ENCODE measurements at regions of chr17 and their contacts with region 1.

Region 1: GRCh38 chr17:29111816-29112499 is 68.2 kb downstream of the MYO18A start:
- DNase-seq: peak in 1 of 2 experiments; percentile 95
- H3K4me3 ChIP-seq: no peak overlapping the region
- H3K27ac ChIP-seq: no peak overlapping the region
- H3K4me1 ChIP-seq: peaks cover 0 to 18% (median 12%) of the 10 kb centered on the region in 4 experiments; a peak in 6 of 7 replicates
- H3K27me3 ChIP-seq: no peaks in the 10 kb centered on the region
- CTCF ChIP-seq: peak; percentile 94 to 99 (median 96)
- EP300 ChIP-seq: no peak
- POLR2A ChIP-seq: no peak
- RAD21 ChIP-seq: peak; percentile 84 to 89

Region 2: DNA sequence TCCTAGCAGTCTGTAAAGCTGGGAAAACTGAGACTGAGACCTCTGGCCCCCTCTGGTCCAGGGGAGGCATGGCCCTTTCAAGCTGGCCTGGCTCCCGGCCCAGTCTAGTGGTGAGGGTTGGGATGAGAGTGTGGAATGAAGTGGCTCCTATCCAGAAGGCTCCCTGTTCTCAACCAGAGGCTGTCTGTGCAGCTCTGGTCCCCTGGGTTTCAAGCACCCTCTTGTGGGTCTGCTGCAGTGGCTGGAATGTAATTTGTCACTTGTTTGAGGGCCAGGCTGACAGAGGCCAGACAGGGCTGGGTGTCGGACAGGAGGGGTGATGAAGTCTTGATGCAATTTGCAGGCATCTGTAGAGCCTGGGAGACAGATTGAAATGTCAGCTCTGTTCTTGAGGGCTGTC is 138.5 kb before region 1 on chr17:
- CTCF ChIA-PET with region 1: interaction called, 207 read pairs
- POLR2A ChIA-PET with region 1: interaction called, 5 read pairs
- DNase-seq: no peak
- H3K4me3 ChIP-seq: no peak overlapping the region
- H3K27ac ChIP-seq: no peak overlapping the region
- H3K4me1 ChIP-seq: peaks cover 10 to 16% (median 11%) of the 10 kb centered on the region in 4 experiments
- H3K27me3 ChIP-seq: peaks cover 0 to 2% (median 0%) of the 10 kb centered on the region in 4 experiments; a peak in 2 of 7 replicates
- CTCF ChIP-seq: no peak
- EP300 ChIP-seq: no peak
- POLR2A ChIP-seq: no peak
- RAD21 ChIP-seq: no peak

Region 3: GRCh38 chr17:29005936-29006511 is 105.9 kb before region 1 on chr17 and contains the start of gene SEZ6:
- CTCF ChIA-PET with region 1: interaction called, 239 read pairs
- POLR2A ChIA-PET with region 1: interaction called, 4 read pairs
- DNase-seq: peak; percentile 29 to 94
- H3K4me3 ChIP-seq: peak within 1 kb of the TSS; percentile 36 to 54 (median 45)
- H3K27ac ChIP-seq: no peak within 1 kb of the TSS
- H3K4me1 ChIP-seq: peaks cover 22 to 59% (median 37%) of the 10 kb centered on the region in 4 experiments
- H3K27me3 ChIP-seq: peaks cover 6 to 25% (median 20%) of the 10 kb centered on the region in 4 experiments; a peak in 6 of 7 replicates
- CTCF ChIP-seq: no peak
- EP300 ChIP-seq: peak in 1 of 2 experiments; percentile 87; a peak in 1 of 3 replicates
- POLR2A ChIP-seq: no peak
- RAD21 ChIP-seq: peak; percentile 15 to 28; a peak in 2 of 4 replicates
- total RNA-seq, gene SEZ6: 6.9 and 7.8 TPM in 2 replicates

Region 4: DNA sequence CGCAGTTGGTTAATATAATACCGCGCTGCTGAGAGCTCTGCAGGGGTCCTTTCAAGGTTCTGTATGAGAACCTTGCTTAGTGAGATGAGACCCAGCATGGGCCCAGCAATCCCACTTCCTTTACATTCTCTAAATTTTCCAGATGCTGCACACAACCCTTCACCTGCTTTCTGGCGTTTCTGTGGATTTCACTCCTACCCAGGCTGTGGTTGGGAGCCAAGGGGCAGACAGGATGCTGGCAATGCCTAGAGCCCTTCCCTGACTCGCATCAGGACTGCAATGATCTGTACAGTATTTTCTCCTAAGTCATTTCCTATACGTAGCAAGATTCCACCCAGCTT is 79.1 kb before region 1 on chr17:
- CTCF ChIA-PET with region 1: interaction called, 41 read pairs
- POLR2A ChIA-PET with region 1: interaction called, 13 read pairs
- DNase-seq: no peak
- H3K4me3 ChIP-seq: peak overlapping the region in 2 of 4 experiments; percentile 32 to 47; a peak in 3 of 8 replicates
- H3K27ac ChIP-seq: peak overlapping the region; percentile 72; the same call in 1 of the 2 replicates
- H3K4me1 ChIP-seq: peaks cover 11 to 31% (median 22%) of the 10 kb centered on the region in 4 experiments
- H3K27me3 ChIP-seq: no peaks in the 10 kb centered on the region
- CTCF ChIP-seq: no peak
- EP300 ChIP-seq: peak in 1 of 2 experiments; percentile 64; a peak in 1 of 3 replicates
- POLR2A ChIP-seq: no peak; a peak in 1 of 3 replicates
- RAD21 ChIP-seq: no peak

Region 5: GRCh38 chr17:29048440-29049368 is 63.3 kb before region 1 on chr17:
- CTCF ChIA-PET with region 1: interaction called, 23 read pairs
- POLR2A ChIA-PET with region 1: no interaction called
- DNase-seq: no peak
- H3K4me3 ChIP-seq: no peak overlapping the region
- H3K27ac ChIP-seq: no peak overlapping the region
- H3K4me1 ChIP-seq: peaks cover 3 to 14% (median 8%) of the 10 kb centered on the region in 4 experiments
- H3K27me3 ChIP-seq: no peaks in the 10 kb centered on the region
- CTCF ChIP-seq: no peak
- EP300 ChIP-seq: no peak
- POLR2A ChIP-seq: no peak
- RAD21 ChIP-seq: no peak

Region 6: GRCh38 chr17:29084541-29085146 is 27.3 kb before region 1 on chr17:
- CTCF ChIA-PET with region 1: no interaction called
- POLR2A ChIA-PET with region 1: no interaction called
- DNase-seq: no peak
- H3K4me3 ChIP-seq: peak overlapping the region in 1 of 4 experiments; percentile 23; a peak in 1 of 8 replicates
- H3K27ac ChIP-seq: no peak overlapping the region
- H3K4me1 ChIP-seq: peaks cover 12 to 36% (median 17%) of the 10 kb centered on the region in 4 experiments
- H3K27me3 ChIP-seq: no peaks in the 10 kb centered on the region; a peak in 1 of 7 replicates
- CTCF ChIP-seq: no peak
- EP300 ChIP-seq: no peak
- POLR2A ChIP-seq: no peak
- RAD21 ChIP-seq: no peak; a peak in 1 of 4 replicates

Region 7: GRCh38 chr17:29148790-29149430 is 37.0 kb after region 1 on chr17:
- CTCF ChIA-PET with region 1: interaction called, 511 read pairs
- POLR2A ChIA-PET with region 1: no interaction called
- DNase-seq: peak; percentile 92 to 99
- H3K4me3 ChIP-seq: peak overlapping the region; percentile 7 to 57 (median 26); a peak in 5 of 8 replicates
- H3K27ac ChIP-seq: no peak overlapping the region
- H3K4me1 ChIP-seq: peaks cover 0 to 10% (median 6%) of the 10 kb centered on the region in 4 experiments; a peak in 6 of 7 replicates
- H3K27me3 ChIP-seq: no peaks in the 10 kb centered on the region
- CTCF ChIP-seq: peak; percentile 95
- EP300 ChIP-seq: no peak
- POLR2A ChIP-seq: peak in 1 of 2 experiments; percentile 67; a peak in 1 of 3 replicates
- RAD21 ChIP-seq: peak; percentile 97 to 98

Measured in H1 (cell line).